PC-3 (cell line): ENCODE measurements at regions of chrX and their contacts with region 1.

Region 1: GRCh38 chrX:69387567-69388487 is 116.3 kb upstream of the NALF2 start:
- DNase-seq: peak; percentile 48
- ATAC-seq: peak; percentile 73
- H3K4me3 ChIP-seq: no peak overlapping the region
- H3K27ac ChIP-seq: no peak overlapping the region
- H3K4me1 ChIP-seq: no peaks in the 10 kb centered on the region
- H3K27me3 ChIP-seq: peaks cover 13% of the 10 kb centered on the region; the same call in 1 of the 2 replicates
- CTCF ChIP-seq: peak; percentile 82

Region 2: DNA sequence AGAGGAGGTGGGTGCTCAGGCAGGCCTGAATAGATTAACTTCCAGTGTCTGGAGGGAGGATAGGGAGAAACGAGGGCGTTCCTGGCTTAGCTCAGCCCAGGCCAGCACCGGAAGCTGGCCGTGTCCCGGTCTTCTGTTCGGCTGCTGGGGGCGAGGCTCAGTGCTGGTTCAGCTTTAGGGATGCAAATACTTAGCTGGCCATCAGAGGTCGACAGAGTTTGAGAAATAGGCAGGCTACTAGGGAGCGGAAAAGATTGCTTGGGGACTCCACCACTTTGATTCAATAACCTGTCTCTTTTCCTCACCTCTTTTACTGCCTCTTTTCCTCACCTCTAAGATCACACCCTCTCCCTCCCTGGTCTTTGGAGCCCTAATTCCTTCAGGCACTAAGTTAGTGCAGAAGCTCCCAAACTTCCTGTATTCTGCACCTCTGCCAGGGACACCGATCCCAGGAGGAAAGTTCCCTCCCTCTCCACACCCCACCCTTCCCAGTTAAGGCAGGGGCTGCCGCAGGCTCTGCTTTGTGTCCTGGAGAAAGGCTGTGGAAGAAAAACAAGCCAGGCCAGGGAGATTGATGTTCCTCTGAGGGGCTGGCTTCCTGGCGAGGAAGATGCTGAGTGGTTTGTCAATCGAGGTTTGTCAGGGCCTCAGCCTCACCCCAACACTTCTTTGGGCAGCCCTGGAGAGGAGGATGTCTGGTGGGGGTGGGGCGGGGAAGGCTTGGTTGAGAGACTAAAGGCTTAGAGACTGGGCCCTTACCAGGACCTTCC is 565.0 kb before region 1 on chrX:
- CTCF ChIA-PET with region 1: no interaction called
- POLR2A ChIA-PET with region 1: no interaction called
- intact Hi-C with region 1: loop called (anchors 5 kb)
- DNase-seq: peak; percentile 67
- ATAC-seq: peak; percentile 79
- H3K4me3 ChIP-seq: no peak overlapping the region
- H3K27ac ChIP-seq: no peak overlapping the region
- H3K4me1 ChIP-seq: peaks cover 9% of the 10 kb centered on the region; the same call in 1 of the 2 replicates
- H3K27me3 ChIP-seq: no peaks in the 10 kb centered on the region
- CTCF ChIP-seq: peak; percentile 74